ENCODE measurements at regions of chr13 and their contacts with region 1.

Region 1: DNA sequence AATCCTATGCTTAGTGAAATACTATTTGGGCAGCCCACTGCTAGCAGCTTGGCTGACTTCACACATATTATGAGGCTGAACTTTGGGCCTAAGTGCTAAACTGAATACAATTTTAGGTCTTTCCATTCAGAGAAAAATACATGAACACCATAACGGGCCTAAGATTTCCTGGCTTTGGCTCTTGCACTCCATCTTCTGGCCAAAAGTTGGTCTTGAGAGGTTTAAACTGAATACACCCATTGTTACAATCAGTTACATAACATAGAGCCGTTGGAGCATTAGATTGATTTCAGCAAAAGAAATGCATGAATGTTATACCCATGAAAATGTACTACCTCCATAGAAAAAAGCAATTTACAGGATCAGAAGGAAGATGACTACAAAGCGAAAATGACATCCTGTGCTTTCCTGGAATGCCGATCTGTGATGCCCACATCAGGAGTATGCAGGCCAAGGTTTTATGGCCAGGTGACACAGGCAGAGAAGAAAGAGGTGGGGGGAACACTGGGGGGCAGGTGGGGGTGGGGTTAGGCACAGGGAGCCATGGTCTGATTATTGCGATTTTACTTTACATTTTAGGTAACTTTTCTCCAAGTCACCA is 11.1 kb upstream of the SHISA2 start:
- DNase-seq: no peak
- H3K4me3 ChIP-seq: no peak overlapping the region
- H3K27ac ChIP-seq: no peak overlapping the region
- H3K4me1 ChIP-seq: no peaks in the 10 kb centered on the region
- H3K27me3 ChIP-seq: no peaks in the 10 kb centered on the region
- CTCF ChIP-seq: peak; percentile 12 to 60 (median 40)

Region 2: DNA sequence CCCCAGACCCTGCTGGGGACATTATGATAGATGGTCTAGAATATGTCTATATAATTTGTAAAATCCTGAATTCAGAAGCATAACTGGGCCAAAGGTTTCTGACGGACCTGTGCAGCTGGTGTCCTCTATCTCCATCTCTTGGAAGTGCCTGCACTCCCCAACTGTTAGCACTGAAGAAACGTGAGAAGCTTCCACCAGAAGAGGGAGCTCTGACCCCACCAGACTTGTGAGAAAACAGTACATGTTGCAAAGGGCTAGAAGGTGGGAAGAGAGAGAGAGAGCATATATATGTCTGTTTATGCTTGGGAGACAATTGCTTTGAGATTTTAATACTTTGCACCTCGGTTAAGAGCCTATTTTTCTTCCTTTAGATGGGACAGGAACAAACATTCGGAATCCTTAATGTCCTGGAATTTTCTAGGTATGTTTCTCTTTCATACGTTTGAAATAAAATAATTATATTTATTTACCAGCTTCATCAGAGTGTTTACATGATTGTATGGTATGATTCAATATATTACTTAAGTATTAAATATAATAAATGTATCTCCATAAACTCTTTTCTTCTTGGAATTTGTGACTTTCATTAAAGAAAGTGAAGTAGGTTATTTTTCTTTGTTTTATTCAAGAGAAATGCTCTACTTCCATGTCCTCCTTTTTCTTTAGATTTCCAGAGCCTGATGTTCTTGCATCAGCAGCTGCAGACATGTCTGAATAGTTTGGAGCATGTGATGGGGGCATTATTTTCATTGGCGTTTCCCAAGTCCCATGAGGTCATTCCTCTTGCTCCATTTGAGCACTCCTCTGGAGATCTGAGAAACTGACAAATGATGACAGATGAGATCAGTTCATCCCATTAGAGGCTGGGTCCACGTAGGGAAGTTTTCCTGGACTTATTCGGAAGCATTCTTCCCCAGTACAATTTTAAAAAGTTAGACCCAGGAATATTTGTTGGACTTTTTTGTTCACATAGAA is 488.2 kb before region 1 on chr13:
- intact Hi-C with region 1: loop called (anchors 2 kb)
- DNase-seq: peak in 1 of 2 donors; percentile 79
- H3K4me3 ChIP-seq: no peak overlapping the region
- H3K27ac ChIP-seq: no peak overlapping the region
- H3K4me1 ChIP-seq: no peaks in the 10 kb centered on the region
- H3K27me3 ChIP-seq: no peaks in the 10 kb centered on the region
- CTCF ChIP-seq: peak; percentile 22 to 82 (median 80)

Region 3: DNA sequence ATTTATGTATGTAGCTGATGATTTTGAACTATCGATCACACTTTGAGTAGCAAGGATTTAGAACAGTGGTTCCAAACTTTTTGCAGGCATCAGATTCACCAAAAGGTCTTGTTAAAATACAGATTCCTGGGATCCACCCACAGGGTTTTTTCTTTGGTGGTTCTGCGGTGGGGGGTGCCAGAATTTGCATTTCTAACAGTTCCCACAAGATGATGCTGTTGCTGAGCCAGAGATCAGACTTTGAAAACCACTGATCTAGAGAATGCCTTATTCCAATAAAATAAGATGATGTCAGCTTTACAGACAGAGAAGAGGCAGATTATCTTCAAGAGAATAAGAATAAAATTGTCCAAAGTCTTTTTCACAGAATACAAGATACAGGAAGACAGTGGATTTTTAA is 69.8 kb after region 1 on chr13:
- intact Hi-C with region 1: no loop called
- DNase-seq: no peak
- H3K4me3 ChIP-seq: no peak overlapping the region
- H3K27ac ChIP-seq: no peak overlapping the region
- H3K4me1 ChIP-seq: no peaks in the 10 kb centered on the region
- H3K27me3 ChIP-seq: no peaks in the 10 kb centered on the region
- CTCF ChIP-seq: no peak

Measured in ascending aorta (tissue), 2 donors.